GM12878 (cell line): ENCODE measurements at regions of chr19 and their contacts with region 1.

Region 1: GRCh38 chr19:46030812-46031550 is 8.1 kb upstream of the PGLYRP1 start:
- DNase-seq: no peak
- ATAC-seq: no peak
- H3K4me3 ChIP-seq: no peak overlapping the region
- H3K27ac ChIP-seq: no peak overlapping the region
- H3K4me1 ChIP-seq: no peaks in the 10 kb centered on the region
- H3K27me3 ChIP-seq: no peaks in the 10 kb centered on the region
- CTCF ChIP-seq: no peak
- EP300 ChIP-seq: no peak
- POLR2A ChIP-seq: no peak
- RAD21 ChIP-seq: no peak

Region 2: DNA sequence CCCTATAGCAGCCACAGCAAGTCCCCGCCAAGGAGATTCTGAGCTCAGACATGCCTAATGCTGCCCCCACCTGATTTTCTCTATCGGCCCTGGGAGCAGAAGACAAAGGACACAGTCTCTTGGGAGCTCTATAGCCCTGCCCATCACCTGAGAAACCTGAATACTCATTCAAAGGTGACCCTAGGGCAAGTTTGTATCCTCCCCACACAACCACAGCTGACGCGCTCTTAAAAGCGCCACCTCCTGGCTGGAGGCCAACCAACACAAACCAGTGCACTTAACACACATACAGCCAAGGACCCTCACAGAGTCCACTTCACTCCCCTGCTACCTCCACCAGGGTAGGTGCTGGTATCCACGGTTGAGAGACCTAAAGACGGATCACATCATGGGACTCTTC is 18.6 kb after region 1 on chr19:
- CTCF ChIA-PET with region 1: interaction called, 19 read pairs
- POLR2A ChIA-PET with region 1: no interaction called
- RAD21 ChIA-PET with region 1: interaction called, 4 read pairs
- SMC1A ChIA-PET with region 1: interaction called, 3 read pairs
- in situ Hi-C with region 1: no loop called
- intact Hi-C with region 1: no loop called
- DNase-seq: no peak
- ATAC-seq: no peak
- H3K4me3 ChIP-seq: no peak overlapping the region
- H3K27ac ChIP-seq: no peak overlapping the region
- H3K4me1 ChIP-seq: no peaks in the 10 kb centered on the region
- H3K27me3 ChIP-seq: 0 out of 4 replicates have a peak, but pooled peaks cover 0 to 2% of the 10 kb centered on the region in 2 experiments
- CTCF ChIP-seq: peak; percentile 22 to 33 (median 23); a peak in 2 of 6 replicates
- EP300 ChIP-seq: no peak
- POLR2A ChIP-seq: no peak
- RAD21 ChIP-seq: no peak

Region 3: GRCh38 chr19:46076951-46077816 is 46.2 kb after region 1 on chr19:
- CTCF ChIA-PET with region 1: interaction called, 12 read pairs
- POLR2A ChIA-PET with region 1: no interaction called
- RAD21 ChIA-PET with region 1: interaction called, 6 read pairs
- SMC1A ChIA-PET with region 1: interaction called, 3 read pairs
- in situ Hi-C with region 1: no loop called
- intact Hi-C with region 1: loop called (anchors 2 kb)
- DNase-seq: no peak
- ATAC-seq: peak; percentile 87
- H3K4me3 ChIP-seq: no peak overlapping the region
- H3K27ac ChIP-seq: no peak overlapping the region
- H3K4me1 ChIP-seq: no peaks in the 10 kb centered on the region
- H3K27me3 ChIP-seq: peaks cover 3 to 9% of the 10 kb centered on the region in 2 experiments; a peak in 3 of 4 replicates
- CTCF ChIP-seq: peak; percentile 54 to 71 (median 62)
- EP300 ChIP-seq: no peak
- POLR2A ChIP-seq: no peak
- RAD21 ChIP-seq: peak; percentile 45; the same call in 1 of the 2 replicates

Region 4: DNA sequence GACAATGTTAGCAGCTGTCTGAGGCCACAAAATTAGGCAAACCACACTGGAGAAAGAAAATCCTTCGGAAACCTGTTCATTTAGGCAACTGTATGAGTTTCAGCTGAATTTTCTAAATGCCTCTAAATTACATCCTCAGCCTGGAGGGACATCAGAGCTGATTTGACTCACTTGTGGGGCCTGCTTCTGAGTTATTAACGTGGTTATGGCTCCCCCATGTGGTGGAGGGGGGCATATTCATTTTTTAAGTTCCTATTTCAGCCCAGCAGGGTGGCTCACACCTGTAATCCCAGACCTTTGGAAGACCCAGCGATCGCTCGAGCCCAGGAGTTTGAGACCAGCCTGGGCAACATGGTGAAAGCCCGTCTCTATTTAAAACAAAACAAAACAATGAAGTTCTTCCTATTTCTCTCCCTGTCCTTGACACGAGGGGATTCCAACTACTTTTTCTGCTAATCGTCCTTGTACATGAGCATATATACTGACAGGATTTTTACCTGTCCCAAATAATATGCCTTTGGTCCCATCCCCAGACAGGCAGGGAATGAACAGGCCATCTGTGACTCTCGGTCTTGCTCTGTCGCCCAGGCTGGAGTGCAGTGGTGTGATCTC is 234.3 kb after region 1 on chr19:
- CTCF ChIA-PET with region 1: interaction called, 75 read pairs
- POLR2A ChIA-PET with region 1: no interaction called
- RAD21 ChIA-PET with region 1: interaction called, 23 read pairs
- SMC1A ChIA-PET with region 1: interaction called, 34 read pairs
- in situ Hi-C with region 1: loop called (anchors 5 kb)
- intact Hi-C with region 1: loop called (anchors 1 kb)
- DNase-seq: peak; percentile 33
- ATAC-seq: peak; percentile 83
- H3K4me3 ChIP-seq: no peak overlapping the region
- H3K27ac ChIP-seq: no peak overlapping the region
- H3K4me1 ChIP-seq: peaks cover 5% of the 10 kb centered on the region; the same call in 1 of the 2 replicates
- H3K27me3 ChIP-seq: peaks cover 0 to 3% of the 10 kb centered on the region in 2 experiments; a peak in 2 of 4 replicates
- CTCF ChIP-seq: peak; percentile 70 to 85 (median 76); a peak in 5 of 6 replicates
- EP300 ChIP-seq: no peak
- POLR2A ChIP-seq: no peak
- RAD21 ChIP-seq: peak; percentile 89